HCT116 (cell line): ENCODE measurements at regions of chr6 and their contacts with region 1.

Region 1: GRCh38 chr6:134882426-134883038 is 67.4 kb downstream of the ALDH8A1 start:
- DNase-seq: peak; percentile 44
- ATAC-seq: peak; percentile 86
- H3K4me3 ChIP-seq: no peak overlapping the region
- H3K27ac ChIP-seq: no peak overlapping the region
- H3K4me1 ChIP-seq: 0 out of 4 replicates have a peak, but pooled peaks cover 0 to 3% of the 10 kb centered on the region in 2 experiments
- H3K27me3 ChIP-seq: no peaks in the 10 kb centered on the region
- CTCF ChIP-seq: peak; percentile 90 to 98 (median 92)
- POLR2A ChIP-seq: no peak
- RAD21 ChIP-seq: peak; percentile 94

Region 2: GRCh38 chr6:134111062-134111677 is 771.4 kb before region 1 on chr6:
- CTCF ChIA-PET with region 1: interaction called, 4 read pairs
- POLR2A ChIA-PET with region 1: no interaction called
- RAD21 ChIA-PET with region 1: no interaction called
- intact Hi-C with region 1: loop called (anchors 1 kb)
- DNase-seq: peak; percentile 58
- ATAC-seq: peak; percentile 81
- H3K4me3 ChIP-seq: no peak overlapping the region
- H3K27ac ChIP-seq: no peak overlapping the region
- H3K4me1 ChIP-seq: no peaks in the 10 kb centered on the region
- H3K27me3 ChIP-seq: no peaks in the 10 kb centered on the region
- CTCF ChIP-seq: peak; percentile 87 to 99 (median 98)
- POLR2A ChIP-seq: no peak
- RAD21 ChIP-seq: peak; percentile 56

Region 3: GRCh38 chr6:134161036-134161435 is 721.5 kb before region 1 on chr6:
- CTCF ChIA-PET with region 1: no interaction called
- POLR2A ChIA-PET with region 1: interaction called, 3 read pairs
- RAD21 ChIA-PET with region 1: no interaction called
- intact Hi-C with region 1: loop called (anchors 1 kb)
- DNase-seq: no peak
- ATAC-seq: no peak
- H3K4me3 ChIP-seq: no peak overlapping the region
- H3K27ac ChIP-seq: no peak overlapping the region
- H3K4me1 ChIP-seq: no peaks in the 10 kb centered on the region
- H3K27me3 ChIP-seq: no peaks in the 10 kb centered on the region
- CTCF ChIP-seq: no peak
- POLR2A ChIP-seq: no peak
- RAD21 ChIP-seq: no peak

Region 4: DNA sequence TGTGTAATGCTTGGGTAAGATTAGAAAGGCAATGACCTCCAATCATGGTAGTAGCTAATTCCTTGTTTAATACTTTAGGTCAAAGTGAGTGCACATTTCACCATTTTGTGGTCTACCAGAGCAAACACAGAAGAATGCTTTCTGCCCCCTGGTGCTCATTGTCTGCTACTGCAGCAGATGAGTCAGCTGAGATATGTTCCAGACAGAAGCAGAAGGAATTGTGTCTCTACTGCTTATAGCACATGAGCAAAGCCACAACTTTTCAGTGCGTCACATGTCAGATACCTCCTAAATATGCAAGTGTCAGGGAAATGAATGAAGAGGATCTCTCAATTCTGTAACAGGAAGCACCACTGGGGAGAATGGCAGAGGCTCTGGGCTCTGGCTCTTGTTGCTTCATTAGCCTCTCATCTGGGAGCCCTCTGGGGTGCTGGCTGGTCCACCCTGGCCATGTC is 241.5 kb before region 1 on chr6:
- CTCF ChIA-PET with region 1: interaction called, 3 read pairs
- POLR2A ChIA-PET with region 1: no interaction called
- RAD21 ChIA-PET with region 1: no interaction called
- intact Hi-C with region 1: loop called (anchors 5 kb)
- DNase-seq: peak; percentile 58
- ATAC-seq: peak; percentile 79
- H3K4me3 ChIP-seq: no peak overlapping the region
- H3K27ac ChIP-seq: no peak overlapping the region
- H3K4me1 ChIP-seq: peaks cover 10 to 25% of the 10 kb centered on the region in 2 experiments; a peak in 3 of 4 replicates
- H3K27me3 ChIP-seq: no peaks in the 10 kb centered on the region
- CTCF ChIP-seq: peak; percentile 65 to 93 (median 86)
- POLR2A ChIP-seq: no peak
- RAD21 ChIP-seq: peak; percentile 87

Region 5: GRCh38 chr6:134938896-134939295 is 56.4 kb after region 1 on chr6:
- CTCF ChIA-PET with region 1: interaction called, 19 read pairs
- POLR2A ChIA-PET with region 1: no interaction called
- RAD21 ChIA-PET with region 1: interaction called, 4 to 9 read pairs
- intact Hi-C with region 1: no loop called
- DNase-seq: no peak
- ATAC-seq: no peak
- H3K4me3 ChIP-seq: no peak overlapping the region
- H3K27ac ChIP-seq: no peak overlapping the region
- H3K4me1 ChIP-seq: no peaks in the 10 kb centered on the region
- H3K27me3 ChIP-seq: no peaks in the 10 kb centered on the region
- CTCF ChIP-seq: no peak
- POLR2A ChIP-seq: no peak
- RAD21 ChIP-seq: no peak

Region 6: GRCh38 chr6:134954272-134955000 is 71.9 kb after region 1 on chr6:
- CTCF ChIA-PET with region 1: no interaction called
- POLR2A ChIA-PET with region 1: no interaction called
- RAD21 ChIA-PET with region 1: no interaction called
- intact Hi-C with region 1: no loop called
- DNase-seq: no peak
- ATAC-seq: no peak; the same call in 1 of the 2 replicates
- H3K4me3 ChIP-seq: no peak overlapping the region
- H3K27ac ChIP-seq: no peak overlapping the region
- H3K4me1 ChIP-seq: no peaks in the 10 kb centered on the region; a peak in 1 of 4 replicates
- H3K27me3 ChIP-seq: no peaks in the 10 kb centered on the region
- CTCF ChIP-seq: no peak
- POLR2A ChIP-seq: no peak
- RAD21 ChIP-seq: no peak

Region 7: DNA sequence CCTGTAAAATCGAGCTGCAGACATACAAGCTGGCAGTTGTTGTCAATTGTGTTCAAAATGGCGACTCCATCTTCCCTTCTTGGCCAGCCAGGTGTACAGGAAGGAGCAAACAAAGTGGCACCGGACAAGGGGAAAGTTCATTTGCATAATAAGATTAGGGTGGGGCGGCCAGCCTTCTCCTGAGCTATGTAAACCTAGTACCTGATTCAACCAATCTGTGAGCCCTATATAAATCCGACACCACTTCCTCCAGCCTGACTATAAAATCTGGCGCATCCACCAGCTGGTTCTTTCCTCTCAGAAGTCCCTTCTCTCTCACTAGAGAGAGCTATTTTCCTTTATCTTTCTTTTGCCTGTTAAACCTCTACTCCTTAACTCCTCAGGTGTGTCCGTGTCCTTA is 180.2 kb after region 1 on chr6:
- CTCF ChIA-PET with region 1: no interaction called
- POLR2A ChIA-PET with region 1: no interaction called
- RAD21 ChIA-PET with region 1: no interaction called
- intact Hi-C with region 1: no loop called
- DNase-seq: no peak
- ATAC-seq: peak; percentile 34; the same call in 1 of the 2 replicates
- H3K4me3 ChIP-seq: no peak overlapping the region
- H3K27ac ChIP-seq: no peak overlapping the region
- H3K4me1 ChIP-seq: no peaks in the 10 kb centered on the region
- H3K27me3 ChIP-seq: no peaks in the 10 kb centered on the region
- CTCF ChIP-seq: no peak
- POLR2A ChIP-seq: no peak
- RAD21 ChIP-seq: 0 out of 2 replicates have a peak, but pooled peaks have one; percentile 9

Region 8: GRCh38 chr6:135162678-135163439 is 280.3 kb after region 1 on chr6:
- CTCF ChIA-PET with region 1: no interaction called
- POLR2A ChIA-PET with region 1: no interaction called
- RAD21 ChIA-PET with region 1: no interaction called
- intact Hi-C with region 1: no loop called
- DNase-seq: peak; percentile 68
- ATAC-seq: peak; percentile 99
- H3K4me3 ChIP-seq: no peak overlapping the region
- H3K27ac ChIP-seq: no peak overlapping the region
- H3K4me1 ChIP-seq: peaks cover 0 to 6% of the 10 kb centered on the region in 2 experiments; a peak in 2 of 4 replicates
- H3K27me3 ChIP-seq: no peaks in the 10 kb centered on the region
- CTCF ChIP-seq: peak; percentile 22 to 90 (median 79); a peak in 5 of 6 replicates
- POLR2A ChIP-seq: no peak
- RAD21 ChIP-seq: no peak